A549 (cell line): ENCODE measurements at regions of chr16 and their contacts with region 1.

Region 1: DNA sequence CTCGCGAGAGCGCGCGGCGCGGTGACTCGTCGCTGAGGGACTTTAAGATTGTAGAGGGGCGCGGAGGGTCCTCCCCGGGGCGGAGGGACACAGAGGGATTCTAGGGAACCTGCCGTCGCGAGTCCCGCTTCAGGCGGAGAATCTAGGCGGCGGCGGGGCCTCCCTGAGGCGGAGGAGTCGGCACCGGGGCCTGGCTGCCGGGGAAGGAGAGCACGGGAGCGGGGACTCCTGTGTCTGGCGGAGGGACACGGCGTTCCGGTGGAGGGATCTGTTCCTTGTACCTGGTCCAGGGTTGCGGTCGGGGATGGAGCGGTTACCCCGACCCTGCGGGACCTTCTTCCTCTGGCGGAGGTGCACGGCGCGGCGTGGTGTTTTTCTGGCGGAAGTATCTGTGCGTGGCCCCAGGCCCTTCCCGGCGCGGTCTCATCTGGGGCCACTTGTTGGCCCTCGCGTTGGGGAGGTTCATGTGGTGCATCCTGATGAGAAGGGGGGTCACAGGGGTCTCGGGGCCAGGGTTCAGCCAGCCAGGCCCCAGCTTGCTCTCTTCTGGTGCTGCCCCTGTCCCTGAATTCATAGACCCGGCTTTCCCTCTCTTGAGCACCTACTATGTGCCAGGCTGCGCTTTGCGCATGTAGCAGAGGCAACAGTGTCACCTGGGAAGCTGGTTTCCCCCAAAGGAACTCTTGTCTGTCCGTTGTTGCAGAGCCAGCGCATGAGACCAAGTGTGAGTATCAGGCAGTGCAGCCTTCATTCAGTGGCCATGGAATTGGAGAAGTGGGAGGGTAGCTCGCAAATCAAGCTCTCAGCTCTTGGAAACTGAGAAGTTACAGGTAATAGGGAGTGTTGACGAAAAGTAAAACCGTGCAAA is 545 bp upstream of the ZKSCAN2 start:
- DNase-seq: peak; percentile 82 to 97
- ATAC-seq: peak; percentile 75
- H3K4me3 ChIP-seq: peak overlapping the region; percentile 85
- H3K27ac ChIP-seq: peak overlapping the region; percentile 84 to 98
- H3K4me1 ChIP-seq: peaks cover 20% of the 10 kb centered on the region
- CTCF ChIP-seq: no peak
- EP300 ChIP-seq: no peak
- POLR2A ChIP-seq: peak; percentile 63
- RAD21 ChIP-seq: no peak

Region 2: DNA sequence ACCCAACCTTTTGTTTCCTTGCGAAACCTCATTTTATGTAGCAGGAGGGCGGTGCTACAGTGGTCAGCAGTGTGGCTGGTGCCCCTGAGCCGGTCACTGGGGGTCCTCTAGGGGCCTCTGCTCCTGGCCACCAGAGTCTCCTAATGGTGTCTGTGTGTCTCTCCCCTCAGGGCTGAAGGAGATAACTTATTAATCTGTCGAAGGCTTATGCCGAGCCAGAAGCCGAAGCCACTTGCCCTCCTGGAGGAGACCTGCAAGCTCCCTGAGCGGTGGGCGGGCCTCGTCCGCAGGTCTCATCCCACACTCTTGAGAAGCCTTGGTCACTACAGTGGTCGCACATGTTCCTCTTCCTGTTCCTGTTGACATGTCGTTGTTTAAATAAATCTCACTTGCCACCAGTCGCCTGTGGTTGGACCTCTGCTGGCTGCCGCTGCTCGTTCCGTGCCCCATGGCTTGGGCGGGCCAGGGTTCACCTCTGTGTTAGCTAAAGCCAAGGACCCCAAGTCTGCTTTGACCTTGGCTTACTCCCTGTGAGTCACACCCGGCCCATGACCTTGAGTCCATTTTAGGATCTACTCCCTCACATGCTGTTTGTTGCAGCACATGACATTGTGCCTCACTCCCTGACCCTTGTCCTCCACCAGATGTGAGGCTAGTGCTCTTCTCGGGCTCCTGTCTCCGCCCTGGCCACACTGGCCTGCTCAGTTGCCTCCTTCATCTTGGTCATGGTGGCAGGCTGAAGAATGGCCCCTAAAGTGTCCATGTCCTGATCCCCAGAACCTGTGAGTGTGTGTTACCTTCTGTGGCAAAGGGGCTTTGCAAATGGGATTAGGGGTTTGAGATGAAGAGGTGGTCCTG is 80.1 kb before region 1 on chr16:
- CTCF ChIA-PET with region 1: no interaction called
- POLR2A ChIA-PET with region 1: no interaction called
- DNase-seq: no peak
- ATAC-seq: no peak; a peak in 1 of 6 replicates
- H3K4me3 ChIP-seq: no peak overlapping the region
- H3K27ac ChIP-seq: no peak overlapping the region
- H3K4me1 ChIP-seq: no peaks in the 10 kb centered on the region
- CTCF ChIP-seq: no peak
- EP300 ChIP-seq: no peak
- POLR2A ChIP-seq: no peak
- RAD21 ChIP-seq: no peak

Region 3: GRCh38 chr16:25270577-25270976 is 12.4 kb after region 1 on chr16:
- CTCF ChIA-PET with region 1: interaction called, 15 read pairs
- POLR2A ChIA-PET with region 1: no interaction called
- DNase-seq: no peak
- ATAC-seq: no peak
- H3K4me3 ChIP-seq: no peak overlapping the region
- H3K27ac ChIP-seq: no peak overlapping the region
- H3K4me1 ChIP-seq: no peaks in the 10 kb centered on the region
- CTCF ChIP-seq: no peak
- EP300 ChIP-seq: no peak
- POLR2A ChIP-seq: no peak
- RAD21 ChIP-seq: no peak

Region 4: GRCh38 chr16:25279491-25279890 is 21.3 kb after region 1 on chr16:
- CTCF ChIA-PET with region 1: interaction called, 13 read pairs
- POLR2A ChIA-PET with region 1: no interaction called
- DNase-seq: no peak
- ATAC-seq: no peak
- H3K4me3 ChIP-seq: no peak overlapping the region
- H3K27ac ChIP-seq: no peak overlapping the region
- H3K4me1 ChIP-seq: no peaks in the 10 kb centered on the region
- CTCF ChIP-seq: no peak
- EP300 ChIP-seq: no peak
- POLR2A ChIP-seq: no peak
- RAD21 ChIP-seq: no peak